WTC11 (cell line): ENCODE measurements at regions of chr1 and their contacts with region 1.

Region 1: GRCh38 chr1:172398970-172399755 is 21.3 kb upstream of the C1orf105 start:
- DNase-seq: no peak
- ATAC-seq: peak; percentile 19; the same call in 1 of the 2 replicates
- H3K4me3 Mint-ChIP-seq: no peak overlapping the region; the same call in 1 of the 2 replicates
- H3K27ac Mint-ChIP-seq: peak overlapping the region; percentile 15; the same call in 1 of the 2 replicates
- H3K4me1 Mint-ChIP-seq: peaks cover 45% of the 10 kb centered on the region
- H3K27me3 Mint-ChIP-seq: no peaks in the 10 kb centered on the region
- CTCF ChIP-seq: peak; percentile 33; the same call in 1 of the 2 replicates

Region 2: DNA sequence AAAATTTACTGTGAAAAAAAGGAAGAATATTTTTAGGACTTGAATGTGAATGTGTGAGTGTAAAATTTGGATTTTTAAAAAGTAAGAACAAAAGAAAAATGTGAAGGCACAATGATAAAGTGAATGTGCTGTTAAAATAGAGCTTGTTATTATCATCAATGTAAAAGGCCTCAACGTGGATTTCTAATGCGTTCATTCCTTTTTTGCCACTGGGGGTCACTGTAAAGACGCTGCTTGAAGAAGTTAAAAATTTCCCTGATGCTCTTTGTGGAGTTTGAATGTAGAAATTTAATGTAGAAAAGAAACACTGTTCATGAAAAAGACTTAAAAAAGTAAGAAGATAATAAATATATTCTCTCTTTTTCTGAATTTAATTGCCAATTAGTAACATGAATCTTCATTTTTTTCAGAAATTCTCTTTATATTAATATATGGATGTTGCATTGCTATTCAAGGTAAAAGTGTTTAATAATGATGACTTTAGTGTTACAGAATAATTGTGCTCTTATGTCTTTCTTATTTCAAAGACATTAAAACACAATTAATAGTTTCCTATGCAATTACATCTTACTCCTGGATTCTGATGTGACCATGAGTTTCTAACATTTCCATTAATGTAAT is 396.3 kb before region 1 on chr1:
- CTCF ChIA-PET with region 1: interaction called, 17 read pairs
- POLR2A ChIA-PET with region 1: no interaction called
- DNase-seq: no peak
- ATAC-seq: no peak
- H3K4me3 Mint-ChIP-seq: no peak overlapping the region
- H3K27ac Mint-ChIP-seq: no peak overlapping the region
- H3K4me1 Mint-ChIP-seq: no peaks in the 10 kb centered on the region
- H3K27me3 Mint-ChIP-seq: no peaks in the 10 kb centered on the region
- CTCF ChIP-seq: no peak

Region 3: GRCh38 chr1:172149346-172149745 is 249.8 kb before region 1 on chr1:
- CTCF ChIA-PET with region 1: interaction called, 13 read pairs
- POLR2A ChIA-PET with region 1: no interaction called
- DNase-seq: no peak
- ATAC-seq: no peak
- H3K4me3 Mint-ChIP-seq: no peak overlapping the region
- H3K27ac Mint-ChIP-seq: 0 out of 2 replicates have a peak overlapping the region, but pooled peaks have one; percentile 5
- H3K4me1 Mint-ChIP-seq: peaks cover 27% of the 10 kb centered on the region
- H3K27me3 Mint-ChIP-seq: no peaks in the 10 kb centered on the region
- CTCF ChIP-seq: no peak

Region 4: GRCh38 chr1:172373864-172374263 is 25.3 kb before region 1 on chr1:
- CTCF ChIA-PET with region 1: no interaction called
- POLR2A ChIA-PET with region 1: no interaction called
- DNase-seq: no peak
- ATAC-seq: no peak
- H3K4me3 Mint-ChIP-seq: no peak overlapping the region
- H3K27ac Mint-ChIP-seq: no peak overlapping the region
- H3K4me1 Mint-ChIP-seq: peaks cover 4% of the 10 kb centered on the region
- H3K27me3 Mint-ChIP-seq: no peaks in the 10 kb centered on the region
- CTCF ChIP-seq: no peak

Region 5: GRCh38 chr1:172417552-172417951 is 18.4 kb after region 1 on chr1:
- CTCF ChIA-PET with region 1: interaction called, 11 read pairs
- POLR2A ChIA-PET with region 1: no interaction called
- DNase-seq: no peak
- ATAC-seq: peak; percentile 62
- H3K4me3 Mint-ChIP-seq: no peak overlapping the region
- H3K27ac Mint-ChIP-seq: no peak overlapping the region
- H3K4me1 Mint-ChIP-seq: peaks cover 48% of the 10 kb centered on the region
- H3K27me3 Mint-ChIP-seq: no peaks in the 10 kb centered on the region
- CTCF ChIP-seq: no peak

Region 6: GRCh38 chr1:172532700-172533509 is 133.7 kb after region 1 on chr1 and contains the start of gene SUCO:
- CTCF ChIA-PET with region 1: no interaction called
- POLR2A ChIA-PET with region 1: no interaction called
- DNase-seq: peak; percentile 100
- ATAC-seq: peak; percentile 93
- H3K4me3 Mint-ChIP-seq: peak within 1 kb of the TSS; percentile 100
- H3K27ac Mint-ChIP-seq: peak within 1 kb of the TSS; percentile 100
- H3K4me1 Mint-ChIP-seq: peaks cover 43% of the 10 kb centered on the region
- H3K27me3 Mint-ChIP-seq: peaks cover 24% of the 10 kb centered on the region
- CTCF ChIP-seq: no peak
- total RNA-seq, gene SUCO: 32.9 to 37.4 TPM (median 33.7 TPM) in 3 replicates